Dendritic cell treated with granulocyte-macrophage colony-stimulating factor and Interleukin-4, amounts not matched to agents 40 ng/mL and 50 ng/mL, for 4 days (primary cell): ENCODE measurements at regions of chr3 and their contacts with region 1.

Region 1: DNA sequence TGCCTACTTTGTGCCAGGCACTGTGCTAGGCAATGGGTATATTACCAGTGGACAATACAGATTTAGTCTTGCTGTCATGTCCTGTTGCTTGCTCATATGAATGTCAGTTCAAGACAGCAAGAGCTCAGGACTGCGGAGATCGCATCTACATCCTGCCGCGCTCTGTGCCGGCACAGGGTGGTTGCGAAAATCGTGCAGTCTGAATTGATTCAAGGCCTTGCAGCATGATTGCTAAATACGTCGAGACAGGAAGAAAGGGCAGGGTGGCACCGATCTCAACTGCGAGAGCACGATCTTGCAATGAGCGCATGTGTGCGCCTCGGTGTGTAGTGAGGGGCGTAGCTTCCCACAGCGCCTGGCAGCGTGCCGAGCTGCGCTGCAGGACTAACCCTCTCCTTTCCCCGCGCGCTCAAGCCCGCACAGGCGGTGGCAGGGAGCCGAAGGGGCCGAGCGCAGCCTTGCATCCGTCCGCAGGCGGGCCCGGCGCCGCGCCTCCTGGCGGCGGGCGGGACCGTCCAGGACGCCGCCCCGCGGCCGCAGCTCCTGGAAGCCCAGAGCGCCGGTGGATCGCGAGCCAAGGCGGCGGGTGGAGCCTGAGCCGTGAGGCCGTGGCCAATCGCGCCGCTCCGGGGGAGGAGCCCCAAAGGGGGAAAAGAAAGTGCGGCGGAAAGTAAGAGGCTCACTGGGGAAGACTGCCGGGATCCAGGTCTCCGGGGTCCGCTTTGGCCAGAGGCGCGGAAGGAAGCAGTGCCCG is at the start of gene IL1RAP:
- H3K4me3 Mint-ChIP-seq: peak within 1 kb of the TSS; percentile 92
- H3K27ac Mint-ChIP-seq: peak within 1 kb of the TSS; percentile 90
- H3K4me1 Mint-ChIP-seq: peaks cover 46% of the 10 kb centered on the region
- H3K27me3 Mint-ChIP-seq: no peaks in the 10 kb centered on the region

Region 2: DNA sequence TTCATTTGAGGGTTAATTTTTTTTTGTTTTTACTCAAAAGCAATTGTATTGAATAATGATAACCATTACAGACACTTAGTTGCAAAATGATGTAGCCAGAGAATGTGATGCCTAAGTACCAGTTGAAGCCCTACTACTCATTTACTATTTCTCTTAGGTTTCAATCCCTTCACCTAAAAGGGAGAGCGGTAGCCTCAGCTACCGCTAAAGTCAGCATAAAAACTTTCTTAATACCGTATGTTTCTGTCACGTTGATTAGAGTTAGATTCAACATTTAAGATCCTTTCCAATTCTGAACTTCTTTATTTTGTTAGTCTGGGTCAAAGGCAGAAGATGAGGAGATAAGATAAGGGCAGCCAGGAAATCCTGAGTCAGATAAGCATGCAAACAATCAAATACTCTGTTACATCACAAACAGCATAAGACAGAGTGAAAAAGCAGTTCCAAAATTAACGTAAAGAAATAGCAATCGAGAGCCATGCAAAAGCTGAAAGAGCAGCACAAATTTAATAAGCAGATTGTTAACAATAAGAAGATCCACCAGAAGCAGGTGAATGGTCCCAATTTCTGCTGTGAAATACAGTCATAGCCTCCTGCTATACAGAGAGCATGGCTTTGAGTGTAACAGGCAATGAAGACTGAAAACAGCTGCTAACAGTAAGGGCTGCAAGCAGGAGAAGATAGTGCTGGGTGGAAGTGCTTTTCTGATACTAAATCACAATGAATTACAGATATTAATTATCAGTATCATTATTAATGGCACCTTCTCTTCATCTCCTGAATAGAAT is 66.9 kb before region 1 on chr3:
- intact Hi-C with region 1: loop called (anchors 5 kb)
- H3K4me3 Mint-ChIP-seq: no peak overlapping the region
- H3K27ac Mint-ChIP-seq: no peak overlapping the region
- H3K4me1 Mint-ChIP-seq: peaks cover 15% of the 10 kb centered on the region
- H3K27me3 Mint-ChIP-seq: no peaks in the 10 kb centered on the region

Region 3: DNA sequence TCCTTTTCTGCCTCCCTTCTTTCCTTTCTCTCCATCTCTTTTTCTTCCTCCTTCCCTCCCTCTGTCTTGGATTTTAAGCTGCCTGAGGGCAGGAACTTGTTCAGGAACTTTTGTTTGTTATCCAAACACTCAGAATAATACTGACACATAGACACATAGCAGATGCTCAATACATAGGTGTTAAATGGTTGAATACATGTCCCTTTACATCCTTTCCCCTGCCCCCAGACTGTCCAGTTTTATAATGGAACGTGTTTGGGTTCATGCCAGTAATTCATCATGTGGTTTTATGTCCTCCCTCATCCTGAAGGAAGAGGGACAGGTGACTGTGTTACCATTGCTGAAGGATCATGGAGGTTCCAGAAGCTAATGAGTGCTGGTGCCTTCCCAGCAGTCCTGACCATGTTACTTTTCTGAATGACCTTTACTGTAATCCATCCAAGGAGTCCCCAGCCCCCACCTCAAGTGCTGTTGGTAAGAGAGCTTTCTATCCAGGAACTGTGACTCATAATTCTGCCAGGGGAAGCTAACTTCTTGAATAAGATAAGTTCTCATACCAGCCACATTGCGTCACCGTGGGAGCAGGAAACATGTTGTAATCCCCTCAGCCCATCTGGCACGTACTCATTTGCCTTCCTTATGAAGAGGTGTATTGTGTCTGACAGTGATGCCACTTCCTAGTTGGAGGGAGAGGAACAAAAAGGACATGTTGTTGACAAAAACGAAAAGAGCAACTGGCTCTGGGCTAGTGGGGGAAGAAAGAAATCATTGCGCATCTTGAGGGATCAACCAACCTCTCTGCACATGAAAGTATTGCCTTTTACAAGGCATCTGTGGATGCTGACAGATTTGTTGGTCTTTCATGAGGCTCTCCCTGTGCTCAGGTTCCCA is 52.7 kb after region 1 on chr3:
- intact Hi-C with region 1: loop called (anchors 10 kb)
- H3K4me3 Mint-ChIP-seq: no peak overlapping the region
- H3K27ac Mint-ChIP-seq: peak overlapping the region; percentile 31
- H3K4me1 Mint-ChIP-seq: peaks cover 14% of the 10 kb centered on the region
- H3K27me3 Mint-ChIP-seq: no peaks in the 10 kb centered on the region

Region 4: GRCh38 chr3:190617185-190617584 is 103.6 kb after region 1 on chr3:
- intact Hi-C with region 1: loop called (anchors 1 kb)
- H3K4me3 Mint-ChIP-seq: no peak overlapping the region
- H3K27ac Mint-ChIP-seq: peak overlapping the region; percentile 80
- H3K4me1 Mint-ChIP-seq: peaks cover 58% of the 10 kb centered on the region
- H3K27me3 Mint-ChIP-seq: no peaks in the 10 kb centered on the region

Region 5: GRCh38 chr3:190701096-190701532 is 187.5 kb after region 1 on chr3:
- intact Hi-C with region 1: loop called (anchors 2 kb)
- H3K4me3 Mint-ChIP-seq: no peak overlapping the region
- H3K27ac Mint-ChIP-seq: no peak overlapping the region
- H3K4me1 Mint-ChIP-seq: peaks cover 12% of the 10 kb centered on the region
- H3K27me3 Mint-ChIP-seq: peaks cover 1% of the 10 kb centered on the region